Adrenal gland (tissue), 19 donors: ENCODE measurements at regions of chr19 and their contacts with region 1.

Region 1: GRCh38 chr19:16628183-16628983 is at the start of gene MED26:
- DNase-seq: peak; percentile 96 to 98 (median 97)
- H3K4me3 ChIP-seq: peak within 1 kb of the TSS; percentile 60 to 88 (median 81)
- H3K27ac ChIP-seq: peak within 1 kb of the TSS; percentile 87 to 99 (median 96)
- H3K4me1 ChIP-seq: peaks cover 30 to 44% of the 10 kb centered on the region in 2 donors
- H3K27me3 ChIP-seq: no peaks in the 10 kb centered on the region
- CTCF ChIP-seq: peak in 1 of 6 experiments; percentile 26
- POLR2A ChIP-seq: peak; percentile 86 to 95
- total RNA-seq, gene MED26: 5.2 to 17.3 (median 9.5) TPM

Region 2: GRCh38 chr19:16572332-16573211 is 55.8 kb before region 1 on chr19 and contains the start of gene SLC35E1:
- intact Hi-C with region 1: loop called (anchors 5 to 10 kb)
- DNase-seq: peak; percentile 96 to 98 (median 97)
- H3K4me3 ChIP-seq: peak within 1 kb of the TSS; percentile 21 to 99 (median 64)
- H3K27ac ChIP-seq: peak within 1 kb of the TSS; percentile 74 to 94 (median 79)
- H3K4me1 ChIP-seq: peaks cover 16 to 32% of the 10 kb centered on the region in 2 donors
- H3K27me3 ChIP-seq: no peaks in the 10 kb centered on the region
- CTCF ChIP-seq: no peak
- POLR2A ChIP-seq: peak; percentile 86 to 93
- total RNA-seq, gene SLC35E1: 20.1 to 49.8 (median 39.5) TPM